ENCODE measurements at regions of chr2 and their contacts with region 1.

Region 1: GRCh38 chr2:37653805-37654378 is 17.6 kb downstream of the CDC42EP3 start:
- DNase-seq: peak; percentile 76
- ATAC-seq: peak; percentile 84

Region 2: DNA sequence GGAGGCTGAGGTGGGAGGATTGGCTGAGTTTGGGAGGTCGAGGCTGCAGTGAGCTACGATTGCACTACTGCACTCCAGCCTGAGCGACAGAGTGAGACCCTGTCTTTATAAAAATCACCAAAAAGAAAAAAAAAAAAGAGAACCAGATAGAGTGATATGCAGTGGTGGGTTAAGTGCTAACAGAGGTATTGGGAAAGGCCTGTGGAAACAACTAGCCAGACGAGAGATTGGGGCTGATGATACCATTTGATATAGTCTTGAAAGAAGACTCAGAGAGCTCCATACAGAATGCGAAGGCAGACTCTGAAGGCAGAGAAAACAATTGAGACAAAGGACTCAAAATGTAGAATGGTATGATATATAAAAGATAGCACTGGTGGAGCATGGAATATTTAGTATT is 116.6 kb before region 1 on chr2:
- intact Hi-C with region 1: loop called (anchors 5 kb)
- DNase-seq: no peak
- ATAC-seq: no peak

Region 3: DNA sequence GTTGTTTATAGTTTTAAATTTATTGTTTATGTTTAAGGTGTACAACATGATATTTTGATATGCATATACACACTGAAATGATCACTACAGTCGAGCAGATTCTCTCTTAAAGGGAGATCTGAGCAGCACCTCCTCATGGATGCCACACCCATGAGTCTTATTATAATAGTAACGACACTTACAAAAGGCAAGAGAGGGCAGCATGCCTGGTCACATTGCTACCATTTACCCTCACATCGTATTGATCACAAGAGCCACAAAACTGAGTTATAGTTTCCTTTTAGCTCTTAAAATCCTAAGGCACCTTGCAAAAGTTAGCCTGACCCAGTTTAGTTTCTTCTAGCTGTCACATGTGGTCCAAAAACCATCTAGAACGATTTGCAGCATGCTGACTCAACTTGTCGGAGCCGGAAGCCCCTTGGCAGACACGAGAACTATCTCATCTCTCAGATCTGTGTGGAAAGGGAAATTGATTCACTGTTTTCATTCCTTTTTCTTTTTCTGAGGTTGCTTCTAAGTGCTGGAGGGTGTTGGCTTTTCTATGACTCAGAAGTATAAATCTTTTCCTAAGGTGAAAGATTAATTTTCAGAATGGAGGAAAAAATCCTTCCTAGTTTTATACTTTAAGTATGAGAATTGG is 67.8 kb before region 1 on chr2:
- intact Hi-C with region 1: loop called (anchors 5 kb)
- DNase-seq: no peak
- ATAC-seq: peak; percentile 27

Region 4: GRCh38 chr2:37635504-37636380 is 18.1 kb before region 1 on chr2:
- intact Hi-C with region 1: no loop called
- DNase-seq: peak; percentile 60
- ATAC-seq: peak; percentile 68